T-cell (primary cell): ENCODE measurements at regions of chr6 and their contacts with region 1.

Region 1: GRCh38 chr6:138673346-138674014 is 100.1 kb upstream of the CCDC28A start:
- DNase-seq: no peak
- ATAC-seq: no peak
- H3K4me3 ChIP-seq: no peak overlapping the region
- H3K4me3 Mint-ChIP-seq: no peak overlapping the region
- H3K27ac ChIP-seq: no peak overlapping the region
- H3K27ac Mint-ChIP-seq: no peak overlapping the region
- H3K4me1 ChIP-seq: no peaks in the 10 kb centered on the region
- H3K4me1 Mint-ChIP-seq: no peaks in the 10 kb centered on the region
- H3K27me3 ChIP-seq: peaks cover 0 to 3% of the 10 kb centered on the region in 2 experiments
- H3K27me3 Mint-ChIP-seq: peaks cover 0 to 2% of the 10 kb centered on the region in 2 donors

Region 2: GRCh38 chr6:138662471-138662870 is 11.0 kb before region 1 on chr6:
- CTCF ChIA-PET with region 1: interaction called in 1 of 2 experiments, 11 read pairs
- POLR2A ChIA-PET with region 1: interaction called in 1 of 2 experiments, 4 read pairs
- DNase-seq: no peak
- ATAC-seq: no peak
- H3K4me3 ChIP-seq: no peak overlapping the region
- H3K4me3 Mint-ChIP-seq: no peak overlapping the region
- H3K27ac ChIP-seq: no peak overlapping the region
- H3K27ac Mint-ChIP-seq: no peak overlapping the region
- H3K4me1 ChIP-seq: no peaks in the 10 kb centered on the region
- H3K4me1 Mint-ChIP-seq: no peaks in the 10 kb centered on the region
- H3K27me3 ChIP-seq: no peaks in the 10 kb centered on the region
- H3K27me3 Mint-ChIP-seq: peaks cover 0 to 7% of the 10 kb centered on the region in 2 donors

Region 3: GRCh38 chr6:138752017-138752416 is 78.5 kb after region 1 on chr6:
- CTCF ChIA-PET with region 1: no interaction called
- POLR2A ChIA-PET with region 1: interaction called in 1 of 2 experiments, 11 read pairs
- DNase-seq: no peak
- ATAC-seq: no peak
- H3K4me3 ChIP-seq: no peak overlapping the region
- H3K4me3 Mint-ChIP-seq: no peak overlapping the region
- H3K27ac ChIP-seq: no peak overlapping the region
- H3K27ac Mint-ChIP-seq: no peak overlapping the region
- H3K4me1 ChIP-seq: no peaks in the 10 kb centered on the region
- H3K4me1 Mint-ChIP-seq: no peaks in the 10 kb centered on the region
- H3K27me3 ChIP-seq: no peaks in the 10 kb centered on the region
- H3K27me3 Mint-ChIP-seq: no peaks in the 10 kb centered on the region